ENCODE measurements at regions of chr10 and their contacts with region 1.

Region 1: DNA sequence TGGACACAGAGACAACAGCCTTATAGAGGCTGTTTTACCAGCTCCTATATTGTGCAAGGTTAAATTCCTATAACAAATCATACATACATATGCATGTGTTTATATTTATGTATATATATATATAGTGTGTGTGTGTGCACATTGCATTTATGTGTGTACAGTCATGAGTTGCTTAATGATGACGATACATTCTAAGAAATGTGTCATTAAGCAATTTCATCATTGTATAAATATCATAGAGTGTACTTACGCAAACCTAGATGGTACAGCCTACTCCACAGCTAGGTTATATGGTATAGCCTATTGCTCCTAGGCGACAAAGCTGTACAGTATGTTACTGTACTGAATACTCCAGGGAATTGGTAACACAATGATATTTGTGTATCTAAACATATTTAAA is 30.1 kb upstream of the TNKS2 start:
- DNase-seq: no peak
- H3K4me3 ChIP-seq: no peak overlapping the region
- H3K27ac ChIP-seq: no peak overlapping the region
- H3K4me1 ChIP-seq: no peaks in the 10 kb centered on the region
- H3K27me3 ChIP-seq: no peaks in the 10 kb centered on the region
- CTCF ChIP-seq: no peak
- EP300 ChIP-seq: no peak
- POLR2A ChIP-seq: no peak

Region 2: GRCh38 chr10:91891285-91892001 is 123.3 kb after region 1 on chr10:
- intact Hi-C with region 1: loop called (anchors 10 kb)
- DNase-seq: no peak
- H3K4me3 ChIP-seq: no peak overlapping the region
- H3K27ac ChIP-seq: no peak overlapping the region
- H3K4me1 ChIP-seq: peaks cover 8 to 15% (median 12%) of the 10 kb centered on the region in 4 donors
- H3K27me3 ChIP-seq: peaks cover 0 to 7% (median 7%) of the 10 kb centered on the region in 3 donors
- CTCF ChIP-seq: no peak
- EP300 ChIP-seq: no peak
- POLR2A ChIP-seq: no peak

Measured in stomach (tissue), 19 donors.